ENCODE measurements at regions of chr19 and their contacts with region 1.

Region 1: GRCh38 chr19:9075064-9075949 is 11.6 kb upstream of the OR1M1 start:
- DNase-seq: peak; percentile 93
- H3K4me3 ChIP-seq: no peak overlapping the region
- H3K27ac ChIP-seq: peak overlapping the region; percentile 71 to 81 (median 73)
- H3K4me1 ChIP-seq: peaks cover 8 to 25% (median 18%) of the 10 kb centered on the region in 4 donors
- H3K27me3 ChIP-seq: no peaks in the 10 kb centered on the region
- CTCF ChIP-seq: no peak
- EP300 ChIP-seq: no peak
- POLR2A ChIP-seq: no peak

Region 2: GRCh38 chr19:8654591-8655339 is 420.5 kb before region 1 on chr19:
- intact Hi-C with region 1: loop called (anchors 2 kb)
- DNase-seq: no peak
- H3K4me3 ChIP-seq: peak overlapping the region in 2 of 4 donors; percentile 16 to 41
- H3K27ac ChIP-seq: no peak overlapping the region
- H3K4me1 ChIP-seq: peaks cover 5 to 8% (median 7%) of the 10 kb centered on the region in 4 donors
- H3K27me3 ChIP-seq: peaks cover 0 to 49% (median 0%) of the 10 kb centered on the region in 4 donors
- CTCF ChIP-seq: peak; percentile 95 to 99 (median 98)
- EP300 ChIP-seq: no peak
- POLR2A ChIP-seq: no peak

Region 3: DNA sequence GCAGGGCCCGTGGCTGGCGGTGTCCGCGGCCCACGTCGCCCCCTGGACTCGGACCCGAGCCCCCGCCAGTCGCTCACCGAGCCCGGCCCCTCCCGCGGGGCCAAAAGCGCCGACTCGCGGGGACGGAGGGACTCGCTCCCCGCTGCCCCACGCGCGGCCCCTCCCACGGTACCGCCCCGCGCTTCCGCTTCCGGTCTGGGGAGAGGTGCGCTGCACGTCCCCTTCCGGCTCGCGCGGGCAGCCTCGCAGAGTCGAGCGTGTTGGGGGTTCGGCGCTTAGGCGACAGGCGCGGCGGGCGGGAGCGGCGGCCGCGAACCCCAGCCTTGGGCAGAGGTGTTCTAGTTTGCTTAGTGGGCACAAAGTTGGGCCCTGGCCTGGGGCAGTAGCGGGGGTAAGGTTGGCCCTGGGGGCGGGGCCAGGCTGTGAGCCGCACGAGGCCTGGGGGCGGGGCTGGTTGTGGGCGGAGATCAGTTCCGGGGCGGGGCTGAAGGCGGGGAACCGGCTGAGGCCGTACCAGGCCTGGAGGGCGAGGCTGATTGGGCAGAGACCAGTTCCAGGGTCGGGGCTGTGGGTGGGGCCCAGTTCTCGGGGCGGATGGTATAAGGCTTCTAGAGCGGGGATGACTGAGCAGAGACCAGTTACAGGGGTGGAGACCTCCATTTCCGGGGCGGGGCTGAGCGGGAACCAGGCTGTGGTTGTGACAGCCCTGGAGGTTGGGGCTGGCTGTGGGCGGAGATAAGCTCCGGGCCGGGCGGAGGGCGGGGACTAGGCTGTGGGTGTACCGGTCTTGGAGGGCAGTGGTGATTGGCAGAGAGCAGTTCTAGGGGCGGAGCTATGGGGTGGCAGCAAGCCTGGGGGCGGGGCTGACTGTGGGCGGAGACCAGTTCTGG is 242.9 kb before region 1 on chr19 and contains the starts of genes MBD3L1 and ZNF558:
- intact Hi-C with region 1: loop called (anchors 5 kb)
- DNase-seq: peak; percentile 100
- H3K4me3 ChIP-seq: peak within 1 kb of the TSS; percentile 85 to 94 (median 92)
- H3K27ac ChIP-seq: peak within 1 kb of the TSS; percentile 93 to 98 (median 96)
- H3K4me1 ChIP-seq: peaks cover 6 to 35% (median 22%) of the 10 kb centered on the region in 4 donors
- H3K27me3 ChIP-seq: no peaks in the 10 kb centered on the region
- CTCF ChIP-seq: peak; percentile 27 to 55 (median 34)
- EP300 ChIP-seq: no peak
- POLR2A ChIP-seq: peak; percentile 93
- total RNA-seq, gene MBD3L1: not detected
- total RNA-seq, gene ZNF558: 32.8 to 59.2 (median 46.5) TPM

Region 4: GRCh38 chr19:9018163-9018875 is 57.0 kb before region 1 on chr19:
- intact Hi-C with region 1: no loop called
- DNase-seq: no peak
- H3K4me3 ChIP-seq: no peak overlapping the region
- H3K27ac ChIP-seq: no peak overlapping the region
- H3K4me1 ChIP-seq: no peaks in the 10 kb centered on the region
- H3K27me3 ChIP-seq: peaks cover 0 to 11% (median 0%) of the 10 kb centered on the region in 4 donors
- CTCF ChIP-seq: no peak
- EP300 ChIP-seq: no peak
- POLR2A ChIP-seq: no peak

Region 5: GRCh38 chr19:9107375-9107774 is 32.1 kb after region 1 on chr19 and contains the start of gene OR7G2:
- intact Hi-C with region 1: no loop called
- DNase-seq: no peak
- H3K4me3 ChIP-seq: no peak within 1 kb of the TSS
- H3K27ac ChIP-seq: no peak within 1 kb of the TSS
- H3K4me1 ChIP-seq: no peaks in the 10 kb centered on the region
- H3K27me3 ChIP-seq: peaks cover 0 to 43% (median 0%) of the 10 kb centered on the region in 4 donors
- CTCF ChIP-seq: no peak
- EP300 ChIP-seq: no peak
- POLR2A ChIP-seq: no peak
- total RNA-seq, gene OR7G2: not detected

Measured in esophagus muscularis mucosa (tissue), 4 donors.